Ascending aorta (tissue), 2 donors: ENCODE measurements at regions of chr16 and their contacts with region 1.

Region 1: GRCh38 chr16:1420111-1420540 is 421 bp downstream of the UQCC4 start:
- DNase-seq: no peak
- H3K4me3 ChIP-seq: peak overlapping the region; percentile 65 to 70
- H3K27ac ChIP-seq: peak overlapping the region; percentile 93
- H3K4me1 ChIP-seq: peaks cover 7 to 16% of the 10 kb centered on the region in 2 donors
- H3K27me3 ChIP-seq: no peaks in the 10 kb centered on the region
- CTCF ChIP-seq: no peak

Region 2: DNA sequence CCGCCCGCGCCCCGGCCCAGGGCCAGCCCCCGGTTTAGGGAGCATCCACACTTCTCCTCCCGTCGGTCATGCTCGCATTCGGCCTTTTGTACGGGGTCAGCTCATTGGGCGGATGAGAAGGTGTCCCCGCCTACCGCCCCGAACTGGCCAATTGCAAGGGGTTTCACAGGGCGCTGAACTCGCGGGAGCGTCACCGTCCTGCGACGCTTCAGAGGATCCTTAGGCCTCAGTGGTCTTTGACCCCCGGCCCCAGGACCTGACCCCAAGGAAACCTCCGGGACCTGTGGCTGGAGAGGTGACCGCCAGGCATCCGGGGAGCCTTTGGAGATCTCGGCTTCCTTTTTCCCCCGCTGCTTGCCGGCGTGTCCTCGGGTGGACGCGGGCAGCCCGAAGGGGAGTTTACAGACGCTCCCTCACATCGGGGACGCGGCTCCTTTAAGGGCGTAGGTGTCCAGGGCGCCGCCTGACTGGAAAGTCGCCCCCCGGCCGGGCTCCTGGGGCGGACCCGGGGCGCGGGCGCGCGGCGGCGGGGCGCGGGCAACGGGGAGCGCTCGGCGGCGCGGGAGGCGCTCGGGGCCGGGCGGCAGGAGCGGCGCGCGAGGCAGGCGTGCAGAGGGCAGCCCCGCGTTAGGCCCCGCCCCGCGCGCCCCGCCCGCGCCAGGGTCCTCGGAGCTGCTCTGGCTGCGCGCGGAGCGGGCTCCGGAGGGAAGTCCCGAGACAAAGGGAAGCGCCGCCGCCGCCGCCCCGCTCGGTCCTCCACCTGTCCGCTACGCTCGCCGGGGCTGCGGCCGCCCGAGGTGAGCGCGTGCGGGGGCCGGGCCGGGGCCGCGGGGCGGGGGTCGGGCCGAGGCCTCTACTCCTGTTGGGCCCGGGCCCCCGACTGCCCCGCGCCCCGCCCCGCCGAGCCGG is 110.9 kb before region 1 on chr16 and contains the start of gene UBE2I:
- intact Hi-C with region 1: loop called (anchors 1 kb)
- DNase-seq: peak; percentile 86 to 98
- H3K4me3 ChIP-seq: peak within 1 kb of the TSS; percentile 83 to 91
- H3K27ac ChIP-seq: peak within 1 kb of the TSS; percentile 96 to 99
- H3K4me1 ChIP-seq: peaks cover 21 to 24% of the 10 kb centered on the region in 2 donors
- H3K27me3 ChIP-seq: no peaks in the 10 kb centered on the region
- CTCF ChIP-seq: no peak
- total RNA-seq, gene UBE2I: 141 TPM

Region 3: DNA sequence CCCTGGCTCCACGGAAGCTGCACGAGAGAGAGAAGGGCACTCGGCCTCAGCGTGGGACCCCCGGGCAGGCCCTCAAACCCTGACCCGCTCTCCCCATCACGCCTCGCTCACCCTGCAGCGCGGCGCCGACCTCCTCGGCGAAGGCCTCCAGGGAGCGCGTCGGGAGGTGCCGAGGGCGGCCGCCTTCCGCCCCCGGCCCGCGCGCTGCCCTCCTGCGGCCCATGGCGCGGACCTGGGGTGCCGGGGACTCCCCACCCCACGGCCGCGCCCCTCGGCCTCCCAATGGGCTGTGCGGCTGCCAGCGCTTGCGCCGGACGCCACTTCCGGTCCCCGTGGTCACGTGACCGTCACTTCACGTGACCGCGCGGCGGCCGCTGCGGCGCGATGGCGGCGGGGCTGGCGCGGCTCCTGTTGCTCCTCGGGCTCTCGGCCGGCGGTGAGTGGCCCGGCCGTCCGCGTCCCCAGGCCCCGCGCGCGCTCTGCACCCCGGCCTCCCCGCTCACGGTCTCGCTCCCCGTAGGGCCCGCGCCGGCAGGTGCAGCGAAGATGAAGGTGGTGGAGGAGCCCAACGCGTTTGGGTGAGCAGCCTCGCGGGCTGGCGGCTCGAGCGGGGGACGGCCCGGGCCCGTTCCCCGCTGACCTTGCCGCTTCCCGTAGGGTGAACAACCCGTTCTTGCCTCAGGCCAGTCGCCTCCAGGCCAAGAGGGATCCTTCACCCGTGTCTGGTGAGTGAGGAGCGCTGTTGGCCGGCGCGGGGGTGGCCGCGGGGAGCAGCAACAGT is 68.4 kb before region 1 on chr16 and contains the starts of genes GNPTG and TSR3:
- intact Hi-C with region 1: loop called (anchors 5 kb)
- DNase-seq: peak in 1 of 2 donors; percentile 89
- H3K4me3 ChIP-seq: peak within 1 kb of the TSS; percentile 92 to 93
- H3K27ac ChIP-seq: peak within 1 kb of the TSS in 1 of 2 donors; percentile 33
- H3K4me1 ChIP-seq: peaks cover 9 to 16% of the 10 kb centered on the region in 2 donors
- H3K27me3 ChIP-seq: no peaks in the 10 kb centered on the region
- CTCF ChIP-seq: no peak
- total RNA-seq, gene GNPTG: 86.6 TPM
- total RNA-seq, gene TSR3: 143 TPM

Region 4: DNA sequence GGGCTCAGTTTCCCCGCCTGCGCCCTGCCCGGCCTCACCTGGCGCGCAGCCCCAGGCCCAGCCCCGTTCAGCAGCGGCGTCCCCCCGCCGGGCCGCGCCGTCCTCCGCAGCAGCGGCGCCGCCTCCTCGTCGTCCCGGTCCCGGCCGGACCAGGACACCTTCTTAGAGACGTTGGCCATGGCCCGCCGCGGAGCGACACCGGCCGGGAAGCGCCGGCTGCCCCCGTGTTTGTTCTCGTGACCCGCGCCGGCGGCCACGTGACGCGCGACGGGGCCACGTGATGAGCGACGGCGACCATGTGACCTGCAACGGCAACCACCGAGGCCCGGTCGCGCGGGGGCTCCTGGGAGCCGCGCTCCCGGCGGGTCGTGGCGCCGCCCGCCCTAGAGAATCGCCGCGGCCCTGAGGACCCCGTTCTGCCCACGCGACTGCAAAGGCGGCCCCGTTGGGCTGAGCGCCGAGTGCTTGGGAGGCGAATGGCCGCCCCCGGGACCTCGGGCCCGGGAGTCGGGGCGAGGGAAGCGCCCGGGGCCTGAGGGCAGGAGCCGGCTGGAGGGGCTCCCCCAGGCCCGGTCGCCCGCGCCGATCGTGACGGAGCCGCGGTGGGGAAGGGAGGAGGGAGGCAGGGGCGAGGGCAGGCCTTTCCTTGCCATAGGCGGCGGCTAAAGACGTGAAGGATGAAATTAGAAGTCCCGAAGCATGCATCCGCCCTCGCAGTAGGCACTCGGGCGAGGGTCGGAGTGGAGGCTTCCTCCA is 54.8 kb after region 1 on chr16 and contains the start of gene CLCN7:
- intact Hi-C with region 1: loop called (anchors 2 kb)
- DNase-seq: peak; percentile 62 to 94
- H3K4me3 ChIP-seq: peak within 1 kb of the TSS; percentile 88 to 89
- H3K27ac ChIP-seq: peak within 1 kb of the TSS; percentile 83 to 86
- H3K4me1 ChIP-seq: peaks cover 0 to 18% of the 10 kb centered on the region in 2 donors
- H3K27me3 ChIP-seq: no peaks in the 10 kb centered on the region
- CTCF ChIP-seq: no peak
- total RNA-seq, gene CLCN7: 108 TPM

Region 5: GRCh38 chr16:1782352-1783091 is 362.4 kb after region 1 on chr16 and contains the starts of genes NUBP2 and SPSB3:
- intact Hi-C with region 1: loop called (anchors 1 kb)
- DNase-seq: peak; percentile 99 to 100
- H3K4me3 ChIP-seq: peak within 1 kb of the TSS; percentile 84 to 99
- H3K27ac ChIP-seq: peak within 1 kb of the TSS; percentile 77 to 83
- H3K4me1 ChIP-seq: peaks cover 11 to 26% of the 10 kb centered on the region in 2 donors
- H3K27me3 ChIP-seq: no peaks in the 10 kb centered on the region
- CTCF ChIP-seq: no peak
- total RNA-seq, gene NUBP2: 182 TPM
- total RNA-seq, gene SPSB3: 159 TPM